ENCODE measurements at regions of chr9 and their contacts with region 1.

Region 1: GRCh38 chr9:122005597-122005996 is 87.5 kb downstream of the TTLL11 start:
- DNase-seq: peak; percentile 63
- H3K4me3 ChIP-seq: no peak overlapping the region
- H3K27ac ChIP-seq: no peak overlapping the region
- H3K4me1 ChIP-seq: peaks cover 10% of the 10 kb centered on the region
- H3K27me3 ChIP-seq: no peaks in the 10 kb centered on the region

Region 2: DNA sequence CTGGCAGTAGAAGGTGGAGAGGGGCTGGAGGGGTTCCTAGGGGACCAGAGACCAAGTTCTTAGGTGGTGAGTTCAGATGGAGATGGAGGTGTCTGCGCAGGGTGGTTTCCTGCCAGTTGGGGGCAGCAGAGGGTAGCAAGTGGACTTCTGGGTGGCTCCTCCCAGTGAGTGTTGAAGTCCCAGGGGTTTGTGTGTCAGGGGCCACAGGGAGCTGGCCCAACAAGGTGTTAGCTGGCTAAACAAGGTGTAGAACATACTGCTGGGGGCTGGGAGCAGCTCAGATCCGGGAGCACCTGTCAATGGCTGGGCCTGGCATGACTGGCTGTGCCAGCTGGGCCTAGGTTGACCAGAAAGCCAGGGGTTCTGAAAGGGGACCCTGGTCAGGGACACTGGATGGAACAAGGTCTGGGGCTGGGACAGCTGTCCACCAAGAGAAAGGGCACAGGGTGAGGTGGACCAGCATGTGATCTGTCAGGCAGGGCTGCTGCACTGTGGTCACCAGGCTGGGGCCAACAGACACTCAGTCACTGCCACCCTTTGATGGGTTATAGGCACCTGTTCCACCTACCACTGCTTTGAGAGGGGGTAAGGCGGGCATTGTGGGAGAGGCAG is 318.6 kb before region 1 on chr9:
- in situ Hi-C with region 1: loop called (anchors 10 kb)
- DNase-seq: peak; percentile 78
- H3K4me3 ChIP-seq: no peak overlapping the region
- H3K27ac ChIP-seq: no peak overlapping the region
- H3K4me1 ChIP-seq: no peaks in the 10 kb centered on the region
- H3K27me3 ChIP-seq: no peaks in the 10 kb centered on the region